Caco-2 (cell line): ENCODE measurements at regions of chr2 and their contacts with region 1.

Region 1: GRCh38 chr2:195304310-195304709 is 352.7 kb upstream of the SLC39A10 start:
- DNase-seq: peak; percentile 25 to 35
- H3K4me3 ChIP-seq: no peak overlapping the region
- H3K4me3 Mint-ChIP-seq: no peak overlapping the region
- H3K27ac Mint-ChIP-seq: no peak overlapping the region
- H3K4me1 ChIP-seq: peaks cover 10% of the 10 kb centered on the region
- H3K4me1 Mint-ChIP-seq: no peaks in the 10 kb centered on the region
- H3K27me3 ChIP-seq: no peaks in the 10 kb centered on the region
- H3K27me3 Mint-ChIP-seq: no peaks in the 10 kb centered on the region
- CTCF ChIP-seq: peak; percentile 14 to 17

Region 2: DNA sequence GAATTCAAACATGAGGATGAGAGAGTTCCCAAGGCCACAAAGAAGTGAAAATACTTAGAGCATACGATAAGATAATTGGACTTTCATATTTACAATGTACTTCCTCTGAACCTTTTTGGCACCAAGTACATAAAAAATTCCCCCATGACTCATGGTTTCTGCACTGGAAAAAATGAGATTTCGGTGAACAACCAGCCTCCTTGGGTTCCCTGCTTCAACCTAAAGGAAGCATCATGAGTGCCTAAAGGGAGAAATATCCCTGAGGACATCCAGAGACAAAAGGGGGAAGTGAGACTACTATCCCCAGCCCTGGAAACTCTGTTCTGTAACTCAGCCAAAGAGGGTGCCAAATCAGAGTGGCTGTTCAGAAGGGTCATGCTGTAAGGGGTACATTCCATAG is 210.0 kb before region 1 on chr2:
- CTCF ChIA-PET with region 1: interaction called, 6 read pairs
- POLR2A ChIA-PET with region 1: no interaction called
- intact Hi-C with region 1: loop called (anchors 1 kb)
- DNase-seq: no peak
- H3K4me3 ChIP-seq: no peak overlapping the region
- H3K4me3 Mint-ChIP-seq: no peak overlapping the region
- H3K27ac Mint-ChIP-seq: no peak overlapping the region
- H3K4me1 ChIP-seq: no peaks in the 10 kb centered on the region
- H3K4me1 Mint-ChIP-seq: no peaks in the 10 kb centered on the region
- H3K27me3 ChIP-seq: no peaks in the 10 kb centered on the region
- H3K27me3 Mint-ChIP-seq: no peaks in the 10 kb centered on the region
- CTCF ChIP-seq: no peak